Activated CD4-positive, alpha-beta T cell treated with anti-CD3 and anti-CD28 coated beads, Interleukin-2, amount 10 ng/mL, durations not matched to agents 7 days and 5 days (primary cell): ENCODE measurements at regions of chr12 and their contacts with region 1.

Region 1: DNA sequence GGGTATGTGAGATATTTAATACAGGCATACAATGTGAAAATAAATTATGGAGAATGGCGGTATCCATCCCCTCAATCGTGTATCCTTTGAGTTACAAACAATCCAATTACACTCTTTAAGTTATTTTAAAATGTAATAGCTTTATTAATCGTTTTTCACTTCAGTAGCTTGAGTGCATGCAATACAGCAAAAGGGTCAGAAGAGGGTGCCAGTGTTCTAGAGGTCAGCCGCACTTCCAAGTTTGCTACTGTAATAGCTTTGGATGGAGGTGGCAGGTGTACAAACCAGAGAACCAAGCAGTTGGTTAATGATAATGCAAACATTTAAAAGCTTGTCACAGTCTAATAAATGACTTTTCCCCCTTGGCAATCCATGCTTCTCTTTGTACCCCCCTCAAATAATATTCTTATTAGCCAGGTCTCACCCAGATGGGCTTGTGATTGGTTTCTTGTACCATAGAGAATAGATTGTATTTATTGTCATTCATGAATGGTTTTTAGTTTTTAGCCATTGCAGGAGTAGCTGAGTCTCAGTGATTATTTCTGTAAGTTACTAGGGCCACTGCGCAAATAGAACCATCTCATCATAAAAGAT is 127.0 kb downstream of the ERC1 start:
- DNase-seq: peak; percentile 76
- H3K4me3 Mint-ChIP-seq: no peak overlapping the region
- H3K27ac Mint-ChIP-seq: no peak overlapping the region
- H3K4me1 Mint-ChIP-seq: peaks cover 15% of the 10 kb centered on the region
- H3K27me3 Mint-ChIP-seq: no peaks in the 10 kb centered on the region

Region 2: GRCh38 chr12:1130164-1130563 is 12.1 kb after region 1 on chr12:
- CTCF ChIA-PET with region 1: interaction called, 14 read pairs
- POLR2A ChIA-PET with region 1: interaction called, 3 read pairs
- DNase-seq: no peak
- H3K4me3 Mint-ChIP-seq: no peak overlapping the region
- H3K27ac Mint-ChIP-seq: no peak overlapping the region
- H3K4me1 Mint-ChIP-seq: peaks cover 19% of the 10 kb centered on the region
- H3K27me3 Mint-ChIP-seq: no peaks in the 10 kb centered on the region

Region 3: GRCh38 chr12:1583421-1584078 is 465.5 kb after region 1 on chr12:
- CTCF ChIA-PET with region 1: interaction called, 34 read pairs
- POLR2A ChIA-PET with region 1: interaction called, 7 read pairs
- DNase-seq: peak; percentile 82
- H3K4me3 Mint-ChIP-seq: no peak overlapping the region
- H3K27ac Mint-ChIP-seq: no peak overlapping the region
- H3K4me1 Mint-ChIP-seq: peaks cover 17% of the 10 kb centered on the region
- H3K27me3 Mint-ChIP-seq: no peaks in the 10 kb centered on the region

Region 4: DNA sequence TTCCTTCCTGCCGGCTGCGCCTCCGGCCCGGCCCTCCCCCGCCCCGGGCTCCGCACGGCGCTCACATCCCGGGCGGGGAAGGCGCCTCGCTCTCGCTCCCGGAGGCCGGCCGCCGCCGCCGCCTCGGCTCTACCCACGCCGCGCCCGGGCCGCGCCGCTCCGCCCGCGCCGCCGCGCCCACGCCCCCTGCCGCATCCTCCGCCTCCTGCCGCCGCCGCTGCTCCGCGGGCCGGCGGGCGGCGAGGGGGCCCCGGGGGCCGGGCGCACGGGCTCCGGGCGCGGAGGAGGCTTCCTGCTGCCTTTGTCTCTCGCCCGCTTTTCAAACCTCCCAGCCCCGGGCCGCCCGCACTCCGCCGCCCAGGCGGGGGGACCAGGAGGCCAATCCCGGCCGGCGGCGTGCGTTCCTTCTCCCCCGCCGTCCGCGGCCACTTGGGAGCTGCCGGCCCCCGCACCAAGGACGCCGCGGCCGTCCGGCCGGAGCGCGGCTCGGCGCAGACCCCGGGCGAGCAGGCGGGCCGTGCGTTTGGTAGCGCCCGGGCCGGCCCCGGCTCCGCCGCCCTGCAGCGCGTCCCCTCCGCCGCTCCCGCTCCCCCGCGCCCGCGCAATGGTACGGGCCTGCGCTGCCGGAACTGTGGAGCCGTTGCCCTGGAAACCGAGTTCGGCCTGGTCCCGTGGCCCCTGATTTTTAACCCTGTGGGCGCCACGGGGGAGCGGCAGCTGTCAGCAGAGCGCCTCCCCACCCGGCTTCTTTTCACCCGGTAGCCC is 476.4 kb after region 1 on chr12 and contains the start of gene FBXL14:
- CTCF ChIA-PET with region 1: interaction called, 19 read pairs
- POLR2A ChIA-PET with region 1: no interaction called
- DNase-seq: peak; percentile 93
- H3K4me3 Mint-ChIP-seq: peak within 1 kb of the TSS; percentile 96
- H3K27ac Mint-ChIP-seq: peak within 1 kb of the TSS; percentile 91
- H3K4me1 Mint-ChIP-seq: peaks cover 43% of the 10 kb centered on the region
- H3K27me3 Mint-ChIP-seq: no peaks in the 10 kb centered on the region
- total RNA-seq, gene FBXL14: 24.3 to 26.4 TPM

Region 5: DNA sequence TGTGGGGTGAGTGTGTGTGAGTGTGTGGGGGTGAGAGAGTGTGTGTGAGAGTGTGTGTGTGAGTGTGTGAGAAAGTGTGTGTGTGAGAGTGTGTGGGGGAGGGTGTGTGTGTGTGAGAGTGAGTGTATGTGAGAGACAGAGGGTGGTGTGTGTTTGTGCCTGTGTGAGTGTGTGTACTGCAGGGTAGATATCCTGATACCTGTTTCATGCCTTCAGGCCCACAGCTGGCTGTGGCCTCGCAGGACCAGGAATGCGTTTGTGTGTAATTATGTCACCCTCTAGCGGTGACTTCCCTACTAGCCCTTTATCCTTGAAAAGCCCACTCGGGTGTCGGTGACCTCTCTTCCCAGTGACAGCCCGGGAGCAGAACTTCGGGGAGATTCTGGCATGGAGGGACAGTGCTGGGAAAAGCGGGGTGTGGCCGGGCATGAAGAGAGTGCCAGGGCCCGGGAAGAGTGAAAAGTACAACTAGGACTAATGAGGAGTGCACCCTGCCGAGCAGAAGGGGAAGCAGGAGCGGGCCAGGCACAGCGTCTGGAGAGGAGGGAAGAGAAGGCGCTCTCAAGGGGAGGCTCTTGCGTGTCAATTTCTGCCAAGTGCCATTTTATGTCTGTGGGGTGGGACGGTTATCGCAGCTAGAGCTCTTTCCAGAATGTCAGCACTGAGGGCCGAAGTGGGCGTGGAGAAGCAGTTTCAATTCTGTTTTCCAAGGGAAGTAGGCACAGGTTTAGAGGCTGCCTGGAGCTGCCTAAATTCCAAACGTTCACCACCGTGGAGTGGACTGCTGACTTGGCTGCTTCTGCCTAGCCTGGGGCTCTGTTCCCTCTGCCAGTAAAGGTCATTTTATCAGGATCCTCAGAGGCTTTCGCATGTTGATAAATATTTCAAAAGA is 487.3 kb after region 1 on chr12:
- CTCF ChIA-PET with region 1: interaction called, 18 read pairs
- POLR2A ChIA-PET with region 1: no interaction called
- DNase-seq: peak; percentile 73
- H3K4me3 Mint-ChIP-seq: peak overlapping the region; percentile 56
- H3K27ac Mint-ChIP-seq: peak overlapping the region; percentile 1
- H3K4me1 Mint-ChIP-seq: peaks cover 43% of the 10 kb centered on the region
- H3K27me3 Mint-ChIP-seq: peaks cover 5% of the 10 kb centered on the region